Cardiac septum (tissue), 1 donor: ENCODE measurements at regions of chr2 and their contacts with region 1.

Region 1: GRCh38 chr2:217650716-217651360 is 352.0 kb downstream of the TNS1 start:
- DNase-seq: no peak

Region 2: DNA sequence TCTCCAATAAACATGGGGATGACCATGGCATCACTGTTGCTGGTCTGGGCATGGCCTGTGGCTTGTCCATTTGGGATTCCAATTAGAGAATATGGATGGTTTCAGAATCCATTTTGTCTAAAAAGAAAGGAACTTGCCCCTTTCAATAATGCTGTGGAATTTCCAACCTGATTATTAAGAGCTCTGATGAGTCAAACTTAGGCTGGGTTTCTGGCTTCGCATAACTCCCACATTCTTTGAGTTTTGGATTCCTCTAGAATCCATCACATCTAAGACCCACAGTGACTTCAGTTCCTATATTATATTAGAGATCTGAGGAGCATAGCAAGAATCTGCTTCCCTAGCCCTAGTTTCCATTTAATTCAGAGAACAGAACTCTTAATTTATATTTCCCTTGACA is 179.5 kb before region 1 on chr2:
- intact Hi-C with region 1: no loop called
- DNase-seq: no peak

Region 3: DNA sequence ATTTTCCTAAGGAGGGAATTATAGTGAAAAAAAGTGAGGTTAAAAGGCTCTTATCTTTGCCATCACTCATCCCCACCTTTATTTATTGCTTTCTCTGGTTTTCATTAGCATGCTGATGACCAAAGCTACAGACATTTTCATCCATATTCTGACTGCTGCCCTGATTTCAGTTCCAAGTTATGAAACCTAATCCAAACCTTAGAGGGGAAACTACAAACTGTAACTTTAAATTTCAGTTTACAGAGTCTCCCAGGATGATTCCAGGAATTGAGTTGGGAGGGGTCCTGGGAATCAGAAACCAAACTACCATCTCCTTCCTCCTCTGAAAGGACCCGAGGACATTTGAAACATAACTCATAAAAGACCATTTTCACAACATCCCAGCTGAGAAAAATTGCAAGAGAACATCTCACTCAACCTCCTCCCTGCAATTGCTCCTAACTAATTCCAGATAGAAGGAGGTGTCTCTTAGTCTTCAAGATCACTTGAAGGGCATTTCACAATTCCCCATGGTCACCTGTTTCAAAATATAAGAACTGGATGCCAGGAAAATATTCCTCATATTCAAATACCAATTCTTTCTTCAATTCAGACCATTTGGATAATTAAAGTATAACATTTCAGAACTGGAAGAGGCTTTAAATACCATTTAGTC is 168.7 kb before region 1 on chr2:
- intact Hi-C with region 1: no loop called
- DNase-seq: no peak

Region 4: DNA sequence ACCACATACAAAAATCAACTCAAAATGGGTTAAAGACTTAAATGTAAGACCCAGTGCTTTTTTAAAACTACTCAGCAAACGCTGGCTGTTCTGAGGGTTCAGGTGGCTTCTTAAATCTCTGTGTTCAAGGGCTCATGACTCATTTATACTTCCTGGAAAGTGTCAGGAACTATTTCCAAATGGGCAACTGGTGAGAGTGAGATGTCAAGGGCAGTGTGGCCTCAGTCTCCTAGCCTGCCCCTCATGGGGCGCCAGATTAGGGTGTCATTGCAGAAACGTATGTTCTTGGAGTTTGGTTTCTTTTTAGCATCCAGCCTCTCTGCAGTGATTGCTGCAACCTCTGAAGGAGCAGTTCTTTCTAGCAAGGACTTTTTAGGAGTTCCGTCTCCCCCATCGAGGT is 133.4 kb before region 1 on chr2:
- intact Hi-C with region 1: loop called (anchors 5 kb)
- DNase-seq: no peak

Region 5: DNA sequence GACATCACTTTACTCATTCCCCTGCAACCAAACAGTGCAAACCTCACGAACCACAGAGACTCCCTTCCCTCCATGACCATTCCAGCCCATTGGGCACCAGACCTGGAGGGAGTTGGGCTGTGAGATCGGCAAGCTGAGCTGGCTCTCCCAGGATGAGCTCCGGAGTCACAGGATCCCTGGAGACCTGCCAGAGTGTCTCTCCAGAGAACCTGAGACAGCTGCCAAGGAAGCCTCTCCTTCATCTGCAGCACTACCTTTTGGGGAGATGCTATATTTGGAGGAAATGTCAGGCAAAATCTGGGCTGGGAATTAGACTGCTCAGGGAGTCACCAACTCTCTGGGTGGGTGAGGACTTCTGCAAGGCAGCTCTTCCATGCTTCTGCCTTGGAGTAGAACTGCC is 65.5 kb before region 1 on chr2:
- intact Hi-C with region 1: no loop called
- DNase-seq: no peak

Region 6: GRCh38 chr2:217713395-217714286 is 62.8 kb after region 1 on chr2:
- intact Hi-C with region 1: loop called (anchors 5 kb)
- DNase-seq: peak; percentile 83

Region 7: GRCh38 chr2:217756375-217757107 is 105.7 kb after region 1 on chr2:
- intact Hi-C with region 1: loop called (anchors 5 kb)
- DNase-seq: no peak